HAP-1 (cell line): ENCODE measurements at regions of chr2 and their contacts with region 1.

Region 1: DNA sequence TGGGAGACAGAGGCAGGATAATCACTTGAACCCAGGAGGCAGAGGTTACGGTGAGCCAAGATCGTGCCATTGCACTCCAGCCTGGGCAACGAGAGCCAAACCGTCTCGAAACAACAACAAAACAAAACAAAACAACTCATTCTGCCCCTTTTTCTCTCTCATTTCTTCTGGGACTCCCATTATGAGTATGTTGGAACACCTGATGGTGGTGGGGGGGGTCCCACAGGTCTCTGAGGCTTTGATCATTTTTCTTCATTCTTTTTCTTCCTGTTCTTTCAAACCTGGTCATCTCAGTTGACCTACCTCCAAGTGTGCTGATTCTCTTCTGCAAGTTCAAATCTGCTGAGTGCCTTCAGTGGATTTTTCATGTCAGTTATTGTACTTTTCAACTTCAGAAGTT is 8.2 kb upstream of the FAM161A start:
- DNase-seq: no peak
- H3K4me3 ChIP-seq: no peak overlapping the region
- H3K4me1 ChIP-seq: no peaks in the 10 kb centered on the region
- H3K27me3 ChIP-seq: no peaks in the 10 kb centered on the region

Region 2: DNA sequence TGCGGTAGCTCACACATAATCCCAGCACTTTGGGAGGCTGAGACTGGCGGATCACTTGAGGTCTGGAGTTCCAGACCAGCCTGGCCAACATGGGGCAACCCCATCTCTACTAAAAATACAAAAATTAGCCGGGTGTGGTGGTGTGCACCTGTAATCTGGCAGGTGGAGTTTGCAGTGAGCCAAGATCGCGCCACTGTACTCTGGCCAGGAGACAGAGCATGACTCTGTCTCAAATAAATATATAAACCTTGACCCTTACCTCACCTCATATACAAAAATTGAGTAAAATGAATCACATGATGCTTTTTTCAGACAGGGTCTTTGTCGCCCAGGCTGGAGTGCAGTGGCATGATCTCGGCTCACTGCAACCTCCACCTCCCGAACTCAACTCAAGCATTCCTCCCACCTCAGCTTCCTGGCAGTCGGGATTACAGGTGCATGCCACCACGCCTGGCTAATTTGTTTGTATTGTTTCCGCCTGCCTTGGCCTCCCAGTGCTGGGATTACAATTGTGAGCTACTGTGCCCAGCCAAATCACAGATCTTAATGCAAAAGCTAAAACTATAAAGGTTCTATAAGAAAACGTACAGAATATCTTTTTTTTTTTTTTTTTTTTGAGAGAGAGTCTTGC is 349.2 kb before region 1 on chr2:
- in situ Hi-C with region 1: loop called (anchors 10 kb)
- DNase-seq: no peak
- H3K4me3 ChIP-seq: no peak overlapping the region
- H3K4me1 ChIP-seq: no peaks in the 10 kb centered on the region; the same call in 1 of the 2 replicates
- H3K27me3 ChIP-seq: no peaks in the 10 kb centered on the region

Region 3: DNA sequence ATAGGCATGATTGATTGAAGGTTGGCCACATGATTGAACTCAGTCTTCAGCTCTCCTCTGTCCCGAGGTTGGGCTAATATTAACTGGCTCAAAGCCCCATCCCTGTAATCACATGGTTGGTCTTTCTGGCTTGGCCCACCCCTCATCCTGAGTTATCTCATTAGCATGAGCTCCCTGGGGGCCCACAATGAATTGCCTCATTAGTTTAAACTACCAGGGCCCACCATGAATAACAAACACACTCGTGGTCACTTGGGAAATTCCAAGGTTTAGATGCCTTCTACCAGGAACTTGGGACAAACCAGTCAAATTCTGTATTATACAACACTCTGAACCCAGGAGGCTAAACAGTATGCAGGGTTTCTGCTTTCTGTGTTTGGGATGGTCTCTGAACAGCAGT is 212.1 kb after region 1 on chr2:
- in situ Hi-C with region 1: no loop called
- DNase-seq: peak in 1 of 2 experiments; percentile 28
- H3K4me3 ChIP-seq: no peak overlapping the region
- H3K4me1 ChIP-seq: peaks cover 16% of the 10 kb centered on the region
- H3K27me3 ChIP-seq: no peaks in the 10 kb centered on the region